Calu3 (cell line): ENCODE measurements at regions of chr18 and their contacts with region 1.

Region 1: GRCh38 chr18:28189400-28190239 is 12.7 kb upstream of the CDH2 start:
- DNase-seq: peak; percentile 43
- H3K4me3 Mint-ChIP-seq: no peak overlapping the region
- H3K27ac Mint-ChIP-seq: no peak overlapping the region
- H3K4me1 Mint-ChIP-seq: peaks cover 8% of the 10 kb centered on the region
- H3K27me3 Mint-ChIP-seq: no peaks in the 10 kb centered on the region
- CTCF ChIP-seq: peak; percentile 42

Region 2: DNA sequence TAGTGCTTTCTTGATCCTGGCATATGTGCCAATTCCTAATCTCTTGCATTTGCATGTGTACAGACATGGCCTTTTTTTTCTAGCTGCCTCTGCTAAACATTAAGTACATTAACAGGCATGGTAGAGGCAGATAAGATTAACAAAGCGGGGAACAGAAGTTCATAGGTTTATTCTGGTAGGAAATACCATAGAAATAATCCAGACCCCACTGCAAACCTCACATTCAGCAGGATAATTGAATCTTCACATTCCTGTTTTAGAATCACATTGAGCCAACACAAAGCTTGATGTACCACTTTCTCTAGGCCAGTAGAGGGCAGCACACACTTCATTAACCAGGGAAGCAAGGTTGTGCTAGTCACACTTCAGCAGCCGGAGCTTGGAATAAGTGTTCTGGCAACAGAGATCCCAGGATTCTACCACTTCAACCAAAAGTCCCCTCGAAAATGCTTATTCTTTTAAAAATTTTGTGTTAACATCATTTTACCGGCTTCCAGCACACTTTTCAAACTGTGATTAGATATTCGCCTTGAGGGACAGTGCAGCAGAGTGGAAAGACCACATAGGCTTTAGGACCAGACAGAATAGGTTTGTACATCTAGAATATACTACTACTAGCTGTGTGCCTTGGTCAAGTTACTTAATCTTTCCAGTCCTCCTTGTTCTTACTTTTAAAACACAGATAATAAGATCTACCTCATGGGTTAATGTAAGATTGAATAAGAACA is 584.3 kb before region 1 on chr18:
- CTCF ChIA-PET with region 1: no interaction called
- intact Hi-C with region 1: loop called (anchors 10 kb)
- DNase-seq: peak; percentile 67
- H3K4me3 Mint-ChIP-seq: no peak overlapping the region
- H3K27ac Mint-ChIP-seq: peak overlapping the region; percentile 60
- H3K4me1 Mint-ChIP-seq: peaks cover 14% of the 10 kb centered on the region
- H3K27me3 Mint-ChIP-seq: no peaks in the 10 kb centered on the region
- CTCF ChIP-seq: peak; percentile 83

Region 3: DNA sequence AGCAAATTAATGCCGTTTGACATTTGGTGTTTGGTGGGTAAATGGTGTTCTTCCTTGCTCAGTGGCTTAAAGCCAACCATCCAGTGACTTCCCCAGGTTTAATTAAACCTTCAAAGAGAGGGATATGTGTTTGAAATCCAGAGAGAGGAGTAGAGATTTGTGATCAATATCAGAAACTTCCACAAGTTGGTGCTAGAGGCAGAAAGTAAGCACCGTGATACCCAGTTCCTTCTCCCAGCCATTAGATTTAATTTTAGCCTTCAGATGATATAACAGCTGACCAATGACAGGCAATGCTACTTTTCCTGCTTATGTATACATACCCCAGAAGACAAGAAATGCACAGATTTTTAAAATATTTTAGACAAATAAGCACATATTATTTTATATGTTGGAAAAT is 411.2 kb before region 1 on chr18:
- CTCF ChIA-PET with region 1: no interaction called
- intact Hi-C with region 1: loop called (anchors 5 kb)
- DNase-seq: no peak
- H3K4me3 Mint-ChIP-seq: no peak overlapping the region
- H3K27ac Mint-ChIP-seq: no peak overlapping the region
- H3K4me1 Mint-ChIP-seq: no peaks in the 10 kb centered on the region
- H3K27me3 Mint-ChIP-seq: no peaks in the 10 kb centered on the region
- CTCF ChIP-seq: no peak

Region 4: DNA sequence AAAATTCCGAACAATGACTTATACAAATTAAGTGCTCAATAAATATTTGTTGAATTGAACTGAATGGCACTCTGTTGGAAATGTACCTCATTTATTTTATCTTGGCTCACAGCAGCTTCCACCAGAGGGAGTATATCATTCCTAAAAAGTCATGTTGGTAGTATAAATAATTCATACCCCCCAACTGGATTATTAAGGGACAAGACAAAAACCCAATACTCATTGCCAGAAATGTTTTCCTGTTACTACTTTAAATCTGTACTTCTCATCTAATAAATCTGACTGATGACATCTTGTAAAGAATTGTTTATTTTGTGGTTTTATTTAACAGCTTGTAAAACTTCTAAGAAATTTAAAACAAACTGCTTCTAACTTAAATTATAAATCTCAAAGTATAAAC is 176.6 kb before region 1 on chr18:
- CTCF ChIA-PET with region 1: no interaction called
- intact Hi-C with region 1: loop called (anchors 5 kb)
- DNase-seq: no peak
- H3K4me3 Mint-ChIP-seq: no peak overlapping the region
- H3K27ac Mint-ChIP-seq: no peak overlapping the region
- H3K4me1 Mint-ChIP-seq: peaks cover 10% of the 10 kb centered on the region
- H3K27me3 Mint-ChIP-seq: no peaks in the 10 kb centered on the region
- CTCF ChIP-seq: peak; percentile 23